ENCODE measurements at regions of chr11 and their contacts with region 1.

Region 1: DNA sequence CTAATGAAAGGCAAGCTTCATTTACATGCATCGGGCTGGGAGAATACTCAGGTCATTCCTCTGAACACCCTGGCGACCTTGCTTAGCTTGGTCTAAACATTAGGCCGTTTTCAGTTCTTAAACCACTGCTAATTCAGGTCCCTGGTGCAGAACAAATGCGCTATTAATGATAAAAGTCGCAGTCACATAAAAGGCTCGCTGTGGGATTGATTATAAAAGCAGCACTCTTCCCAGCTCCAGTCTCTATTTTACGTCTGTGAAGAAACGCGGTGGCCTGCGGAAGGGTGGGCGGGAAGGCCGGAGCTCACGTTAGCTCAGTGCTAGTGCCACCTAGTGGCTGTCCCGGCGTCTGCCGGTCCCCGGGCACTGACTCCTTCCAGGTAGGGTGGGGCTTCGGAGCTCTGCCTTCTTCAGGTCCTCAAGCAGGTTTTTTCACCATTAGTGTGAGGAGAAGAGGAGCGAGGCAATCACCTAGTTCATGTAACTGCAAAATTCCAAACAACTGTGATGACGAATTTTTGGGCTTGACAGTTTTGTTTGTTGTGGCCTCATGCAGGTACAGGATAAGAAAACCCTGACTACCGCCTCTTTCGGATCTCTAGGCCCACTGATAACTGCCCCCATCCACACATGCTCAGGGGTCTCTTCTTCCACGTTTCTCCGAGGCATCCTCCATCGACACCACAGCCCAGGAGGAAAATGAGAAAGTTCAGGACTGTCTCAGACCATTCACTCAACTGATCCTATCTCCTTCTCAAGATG is 66.5 kb upstream of the CLMP start:
- DNase-seq: no peak
- ATAC-seq: peak; percentile 74
- H3K4me3 ChIP-seq: no peak overlapping the region
- H3K27ac ChIP-seq: no peak overlapping the region
- H3K4me1 ChIP-seq: peaks cover 28% of the 10 kb centered on the region
- H3K27me3 ChIP-seq: no peaks in the 10 kb centered on the region
- CTCF ChIP-seq: peak; percentile 69 to 95 (median 85)
- EP300 ChIP-seq: no peak
- POLR2A ChIP-seq: no peak
- RAD21 ChIP-seq: peak; percentile 46

Region 2: GRCh38 chr11:123103326-123103980 is 158.1 kb before region 1 on chr11:
- CTCF ChIA-PET with region 1: interaction called, 14 read pairs
- POLR2A ChIA-PET with region 1: no interaction called
- RAD21 ChIA-PET with region 1: interaction called, 5 read pairs
- SMC1A ChIA-PET with region 1: interaction called, 3 read pairs
- in situ Hi-C with region 1: no loop called
- intact Hi-C with region 1: no loop called
- DNase-seq: no peak
- ATAC-seq: peak; percentile 82
- H3K4me3 ChIP-seq: no peak overlapping the region
- H3K27ac ChIP-seq: no peak overlapping the region
- H3K4me1 ChIP-seq: no peaks in the 10 kb centered on the region
- H3K27me3 ChIP-seq: peaks cover 0 to 2% of the 10 kb centered on the region in 2 experiments; a peak in 1 of 4 replicates
- CTCF ChIP-seq: peak; percentile 49 to 59 (median 58); a peak in 5 of 6 replicates
- EP300 ChIP-seq: no peak
- POLR2A ChIP-seq: no peak
- RAD21 ChIP-seq: peak; percentile 66

Region 3: GRCh38 chr11:123110356-123110755 is 151.2 kb before region 1 on chr11:
- CTCF ChIA-PET with region 1: interaction called, 25 read pairs
- POLR2A ChIA-PET with region 1: no interaction called
- RAD21 ChIA-PET with region 1: interaction called, 4 read pairs
- SMC1A ChIA-PET with region 1: interaction called, 11 read pairs
- in situ Hi-C with region 1: no loop called
- intact Hi-C with region 1: loop called (anchors 5 kb)
- DNase-seq: no peak
- ATAC-seq: no peak
- H3K4me3 ChIP-seq: no peak overlapping the region
- H3K27ac ChIP-seq: no peak overlapping the region
- H3K4me1 ChIP-seq: no peaks in the 10 kb centered on the region
- H3K27me3 ChIP-seq: peaks cover 0 to 3% of the 10 kb centered on the region in 2 experiments; a peak in 2 of 4 replicates
- CTCF ChIP-seq: no peak
- EP300 ChIP-seq: no peak
- POLR2A ChIP-seq: no peak
- RAD21 ChIP-seq: no peak

Region 4: GRCh38 chr11:123272565-123272964 is 11.0 kb after region 1 on chr11:
- CTCF ChIA-PET with region 1: interaction called, 21 read pairs
- POLR2A ChIA-PET with region 1: no interaction called
- RAD21 ChIA-PET with region 1: interaction called, 3 read pairs
- SMC1A ChIA-PET with region 1: interaction called, 4 read pairs
- in situ Hi-C with region 1: no loop called
- intact Hi-C with region 1: no loop called
- DNase-seq: no peak
- ATAC-seq: no peak
- H3K4me3 ChIP-seq: no peak overlapping the region
- H3K27ac ChIP-seq: no peak overlapping the region
- H3K4me1 ChIP-seq: no peaks in the 10 kb centered on the region
- H3K27me3 ChIP-seq: no peaks in the 10 kb centered on the region
- CTCF ChIP-seq: no peak
- EP300 ChIP-seq: no peak
- POLR2A ChIP-seq: no peak
- RAD21 ChIP-seq: no peak

Region 5: GRCh38 chr11:123286761-123287160 is 25.2 kb after region 1 on chr11:
- CTCF ChIA-PET with region 1: interaction called, 10 read pairs
- POLR2A ChIA-PET with region 1: no interaction called
- RAD21 ChIA-PET with region 1: no interaction called
- SMC1A ChIA-PET with region 1: no interaction called
- in situ Hi-C with region 1: no loop called
- intact Hi-C with region 1: no loop called
- DNase-seq: no peak
- ATAC-seq: no peak
- H3K4me3 ChIP-seq: no peak overlapping the region
- H3K27ac ChIP-seq: no peak overlapping the region
- H3K4me1 ChIP-seq: no peaks in the 10 kb centered on the region
- H3K27me3 ChIP-seq: peaks cover 0 to 1% of the 10 kb centered on the region in 2 experiments; a peak in 1 of 4 replicates
- CTCF ChIP-seq: no peak
- EP300 ChIP-seq: no peak
- POLR2A ChIP-seq: no peak
- RAD21 ChIP-seq: no peak

Region 6: DNA sequence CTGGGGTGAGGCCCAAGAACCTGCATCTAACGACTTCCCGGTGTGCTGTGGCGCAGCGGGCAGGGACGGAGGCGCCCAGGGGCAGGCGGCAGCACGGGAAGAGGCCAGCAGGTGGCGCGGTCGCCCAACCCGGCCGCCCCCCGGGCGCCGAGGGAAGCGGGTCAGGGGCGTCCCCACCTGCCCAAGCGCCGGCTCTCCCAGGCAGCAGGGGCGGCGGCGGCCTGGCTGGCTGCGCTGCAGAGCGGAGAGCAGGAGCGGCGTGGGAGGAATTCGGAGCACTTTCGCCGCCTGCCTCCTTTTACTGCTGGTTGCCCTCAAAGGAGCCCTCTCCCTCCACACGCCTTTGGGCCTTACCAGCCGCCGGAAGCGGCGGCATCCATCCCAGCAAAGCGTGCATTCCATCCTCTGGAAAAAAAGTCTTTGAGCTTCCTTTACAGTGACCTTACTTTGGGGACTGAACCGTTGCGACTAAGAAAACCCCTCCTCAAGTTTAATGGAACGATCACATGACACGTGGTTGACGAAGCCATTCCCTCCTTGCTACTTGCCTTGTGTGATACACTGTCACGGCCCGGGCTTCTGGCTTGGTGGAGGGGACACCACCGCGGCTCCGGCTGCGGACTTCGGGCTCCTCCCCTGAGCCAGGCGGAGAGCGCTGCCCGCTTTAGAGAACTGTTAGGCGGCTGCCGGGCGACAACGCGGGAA is 40.3 kb after region 1 on chr11:
- CTCF ChIA-PET with region 1: interaction called, 11 read pairs
- POLR2A ChIA-PET with region 1: interaction called, 7 read pairs
- RAD21 ChIA-PET with region 1: interaction called, 3 read pairs
- SMC1A ChIA-PET with region 1: interaction called, 4 read pairs
- in situ Hi-C with region 1: no loop called
- intact Hi-C with region 1: loop called (anchors 2 kb)
- DNase-seq: peak; percentile 32
- ATAC-seq: peak; percentile 83
- H3K4me3 ChIP-seq: peak overlapping the region; percentile 62; the same call in 1 of the 2 replicates
- H3K27ac ChIP-seq: peak overlapping the region; percentile 75
- H3K4me1 ChIP-seq: peaks cover 29% of the 10 kb centered on the region
- H3K27me3 ChIP-seq: no peaks in the 10 kb centered on the region
- CTCF ChIP-seq: peak; percentile 76 to 93 (median 84); a peak in 5 of 6 replicates
- EP300 ChIP-seq: no peak
- POLR2A ChIP-seq: no peak; the same call in 1 of the 2 replicates
- RAD21 ChIP-seq: peak; percentile 86

Measured in GM12878 (cell line).